ENCODE measurements at regions of chr17 and their contacts with region 1.

Region 1: GRCh38 chr17:16537130-16537458 is 31.9 kb downstream of the ZNF287 start:
- DNase-seq: no peak
- ATAC-seq: no peak
- H3K4me3 Mint-ChIP-seq: peak overlapping the region; percentile 0 to 99 (median 96)
- H3K27ac Mint-ChIP-seq: peak overlapping the region in 9 of 10 donors; percentile 86 to 98 (median 95)
- H3K4me1 Mint-ChIP-seq: peaks cover 9 to 26% (median 19%) of the 10 kb centered on the region in 4 donors
- H3K27me3 Mint-ChIP-seq: peaks cover 0 to 3% (median 0%) of the 10 kb centered on the region in 5 donors

Region 2: DNA sequence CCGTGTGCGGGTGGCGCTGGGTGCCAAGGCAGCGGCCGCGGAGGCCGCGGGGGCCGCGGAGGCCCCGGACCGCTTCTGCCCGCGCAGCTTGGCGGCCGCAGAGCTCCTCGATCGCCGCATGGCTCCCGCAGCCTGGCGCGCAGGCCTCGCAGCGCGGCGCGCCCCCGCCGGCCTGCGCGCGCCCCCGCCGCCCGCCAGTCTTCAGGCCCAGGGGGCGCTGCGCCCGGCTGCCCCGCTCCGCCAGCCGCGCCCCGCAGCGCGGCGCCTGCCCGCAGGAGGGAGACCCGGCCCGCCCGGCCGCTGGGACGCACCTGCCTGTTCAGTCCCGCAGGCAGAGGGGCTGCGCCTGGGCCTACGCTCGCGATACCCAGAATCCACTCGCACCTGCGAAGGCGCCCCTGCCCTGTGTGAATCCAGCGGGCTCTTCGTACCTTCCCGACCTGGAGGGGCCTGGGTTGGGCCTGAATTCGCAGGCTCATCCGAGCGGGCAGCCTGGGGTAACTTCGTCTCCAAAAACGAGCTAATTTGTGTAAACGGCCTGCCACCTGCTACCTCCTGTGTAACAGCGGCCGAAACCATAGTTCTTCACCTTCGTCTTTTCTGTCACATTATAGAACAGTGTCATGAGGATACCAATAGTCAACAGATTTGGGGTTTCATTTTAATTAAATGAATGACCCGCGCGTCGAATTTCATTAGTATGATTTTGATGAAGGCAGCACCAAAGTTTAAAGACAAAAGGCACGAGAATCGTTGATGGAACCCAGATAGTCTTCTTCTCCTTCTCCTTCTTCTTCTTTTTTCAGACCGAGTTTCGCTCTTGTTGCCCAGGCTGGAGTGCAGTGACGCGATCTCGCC is 183.5 kb before region 1 on chr17 and contains the start of gene CENPV:
- POLR2A ChIA-PET with region 1: interaction called, 10 read pairs
- DNase-seq: peak; percentile 63 to 85 (median 76)
- ATAC-seq: peak; percentile 86 to 88
- H3K4me3 Mint-ChIP-seq: peak within 1 kb of the TSS; percentile 86 to 97 (median 93)
- H3K27ac Mint-ChIP-seq: peak within 1 kb of the TSS; percentile 74 to 94 (median 90)
- H3K4me1 Mint-ChIP-seq: peaks cover 9 to 27% (median 20%) of the 10 kb centered on the region in 4 donors
- H3K27me3 Mint-ChIP-seq: no peaks in the 10 kb centered on the region
- polyA plus RNA-seq, gene CENPV: 24.7 to 30.9 (median 28.3) TPM

Region 3: GRCh38 chr17:16423226-16423872 is 113.7 kb before region 1 on chr17:
- POLR2A ChIA-PET with region 1: no interaction called
- DNase-seq: no peak
- ATAC-seq: no peak
- H3K4me3 Mint-ChIP-seq: no peak overlapping the region
- H3K27ac Mint-ChIP-seq: no peak overlapping the region
- H3K4me1 Mint-ChIP-seq: peaks cover 12 to 37% (median 26%) of the 10 kb centered on the region in 4 donors
- H3K27me3 Mint-ChIP-seq: no peaks in the 10 kb centered on the region

Region 4: DNA sequence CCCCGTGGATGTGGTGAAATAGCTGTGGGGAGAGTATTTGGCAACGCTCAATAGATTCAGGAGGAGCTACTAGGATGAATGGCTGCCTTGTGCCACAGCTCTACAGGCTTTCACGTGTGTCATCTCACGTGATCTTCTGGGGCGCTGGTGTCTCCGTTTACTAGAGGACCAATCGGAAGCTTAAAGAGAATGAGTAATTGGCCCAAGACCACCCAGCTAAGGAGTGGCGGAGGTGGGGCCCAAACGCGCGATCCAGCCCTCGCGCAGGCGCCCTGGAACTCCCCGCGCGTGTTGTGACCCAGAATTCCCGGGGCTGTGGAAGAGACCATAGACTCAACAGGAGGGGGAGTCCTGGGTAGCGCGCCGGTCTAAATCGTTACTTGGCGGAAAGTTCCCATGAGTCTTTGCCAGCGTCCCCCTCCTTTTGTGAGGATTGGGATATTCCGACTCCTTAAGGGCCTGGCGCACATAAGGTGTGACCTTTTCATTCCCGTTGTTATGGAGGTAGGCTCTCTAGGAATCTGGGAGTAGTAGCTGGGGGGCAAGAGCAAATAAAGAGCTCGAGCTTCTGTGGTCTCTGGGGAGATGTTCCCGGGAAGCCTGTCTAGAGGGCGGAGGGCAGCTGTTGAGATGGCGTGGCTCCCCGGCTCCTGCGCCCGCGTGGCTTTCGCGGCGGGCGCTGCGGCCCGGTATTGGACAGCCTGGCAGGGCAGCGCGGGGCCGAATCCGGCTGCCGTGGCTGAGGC is 98.4 kb before region 1 on chr17:
- POLR2A ChIA-PET with region 1: interaction called, 12 read pairs
- DNase-seq: peak; percentile 88 to 98 (median 96)
- ATAC-seq: peak; percentile 89 to 90
- H3K4me3 Mint-ChIP-seq: peak overlapping the region; percentile 98 to 100 (median 99)
- H3K27ac Mint-ChIP-seq: peak overlapping the region; percentile 95 to 99 (median 98)
- H3K4me1 Mint-ChIP-seq: peaks cover 39 to 60% (median 52%) of the 10 kb centered on the region in 4 donors
- H3K27me3 Mint-ChIP-seq: no peaks in the 10 kb centered on the region

Region 5: GRCh38 chr17:16589097-16589969 is 52.2 kb after region 1 on chr17:
- POLR2A ChIA-PET with region 1: interaction called, 23 read pairs
- DNase-seq: peak; percentile 87 to 96 (median 92)
- ATAC-seq: peak; percentile 80 to 85
- H3K4me3 Mint-ChIP-seq: peak overlapping the region; percentile 73 to 84 (median 79)
- H3K27ac Mint-ChIP-seq: peak overlapping the region in 7 of 10 donors; percentile 37 to 89 (median 60)
- H3K4me1 Mint-ChIP-seq: peaks cover 3 to 14% (median 6%) of the 10 kb centered on the region in 4 donors
- H3K27me3 Mint-ChIP-seq: peaks cover 7 to 35% (median 30%) of the 10 kb centered on the region in 5 donors

Measured in naive thymus-derived CD8-positive, alpha-beta T cell (primary cell).